ENCODE measurements at regions of chr5 and their contacts with region 1.

Region 1: DNA sequence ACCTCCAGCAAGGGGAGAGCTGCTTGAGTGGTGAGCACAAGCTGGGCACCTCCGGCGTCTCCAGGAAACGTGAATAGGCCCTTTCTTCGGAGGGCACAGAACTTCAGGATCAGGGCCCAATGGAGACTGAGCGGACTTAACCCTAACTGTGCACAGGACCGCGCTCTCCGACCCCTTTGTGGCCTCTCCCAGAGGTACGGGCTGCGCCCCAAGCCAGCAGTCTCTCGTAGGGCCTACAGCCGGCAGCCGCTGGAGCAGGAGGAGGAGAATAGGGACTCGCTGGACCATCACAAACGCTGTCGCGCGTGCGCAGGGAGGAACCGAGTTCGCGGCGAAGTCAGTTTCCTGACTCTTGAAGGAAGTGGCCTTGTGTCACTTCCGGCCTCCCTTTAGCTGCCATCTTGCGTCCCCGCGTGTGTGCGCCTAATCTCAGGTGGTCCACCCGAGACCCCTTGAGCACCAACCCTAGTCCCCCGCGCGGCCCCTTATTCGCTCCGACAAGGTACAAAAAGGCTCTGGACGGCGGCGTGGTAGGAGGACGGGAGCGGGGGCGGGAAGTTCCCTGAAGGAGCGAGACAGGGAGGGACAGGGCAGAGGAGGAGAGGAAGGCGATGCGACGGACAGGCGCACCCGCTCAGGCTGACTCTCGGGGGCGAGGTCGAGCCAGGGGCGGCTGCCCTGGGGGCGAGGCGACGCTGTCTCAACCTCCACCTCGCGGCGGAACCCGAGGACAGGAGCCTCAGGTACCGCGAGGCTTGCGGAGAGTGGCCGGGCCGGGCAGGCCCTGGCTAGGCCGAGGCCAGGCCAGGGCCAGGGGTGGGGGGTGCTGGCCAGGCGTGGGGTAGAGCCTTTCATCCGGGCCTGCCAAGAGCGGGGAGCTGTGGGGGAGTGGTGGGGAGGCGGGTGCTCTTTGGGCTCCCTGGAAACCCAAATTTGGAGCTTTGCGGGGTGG is at the start of gene BTF3:
- DNase-seq: peak; percentile 97
- H3K4me3 Mint-ChIP-seq: peak within 1 kb of the TSS; percentile 94
- H3K27ac Mint-ChIP-seq: peak within 1 kb of the TSS; percentile 98
- H3K4me1 Mint-ChIP-seq: peaks cover 15% of the 10 kb centered on the region
- H3K27me3 Mint-ChIP-seq: no peaks in the 10 kb centered on the region
- CTCF ChIP-seq: no peak
- total RNA-seq, gene BTF3: 937 and 946 TPM in 2 replicates

Region 2: DNA sequence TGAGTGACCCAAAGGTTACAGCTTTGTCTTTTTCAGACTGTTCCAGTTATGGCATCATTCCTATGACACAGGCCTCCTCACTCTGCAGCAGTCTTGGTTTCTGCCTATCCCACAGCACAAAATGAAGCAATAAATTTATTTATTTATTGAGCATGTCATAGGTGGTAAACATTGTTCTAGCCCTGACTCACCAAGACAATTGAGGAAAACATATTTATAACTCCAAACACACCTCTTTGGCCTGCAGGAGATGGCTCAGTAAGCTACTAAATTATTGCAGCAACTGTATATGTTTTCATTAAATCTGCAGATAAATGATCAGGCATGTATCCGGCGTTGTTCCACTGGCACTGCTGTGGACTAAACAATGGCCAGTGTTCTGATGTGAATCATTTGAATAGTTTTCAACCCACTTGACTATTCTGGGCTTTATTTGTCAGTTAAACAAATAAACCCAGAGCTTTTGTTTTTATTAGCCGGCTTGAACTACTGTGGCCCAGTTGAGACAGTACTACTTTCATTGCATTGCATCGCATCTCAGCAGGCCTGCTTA is 133.0 kb before region 1 on chr5:
- CTCF ChIA-PET with region 1: interaction called, 3 read pairs
- POLR2A ChIA-PET with region 1: interaction called, 24 read pairs
- intact Hi-C with region 1: no loop called
- DNase-seq: peak; percentile 69
- H3K4me3 Mint-ChIP-seq: no peak overlapping the region
- H3K27ac Mint-ChIP-seq: peak overlapping the region; percentile 71
- H3K4me1 Mint-ChIP-seq: peaks cover 33% of the 10 kb centered on the region
- H3K27me3 Mint-ChIP-seq: no peaks in the 10 kb centered on the region
- CTCF ChIP-seq: no peak

Region 3: GRCh38 chr5:73448463-73449136 is 49.7 kb before region 1 on chr5 and contains the start of gene FOXD1:
- CTCF ChIA-PET with region 1: interaction called, 5 read pairs
- POLR2A ChIA-PET with region 1: interaction called, 55 read pairs
- intact Hi-C with region 1: no loop called
- DNase-seq: peak; percentile 91
- H3K4me3 Mint-ChIP-seq: peak within 1 kb of the TSS; percentile 85
- H3K27ac Mint-ChIP-seq: peak within 1 kb of the TSS; percentile 87
- H3K4me1 Mint-ChIP-seq: peaks cover 11% of the 10 kb centered on the region
- H3K27me3 Mint-ChIP-seq: no peaks in the 10 kb centered on the region
- CTCF ChIP-seq: no peak
- total RNA-seq, gene FOXD1: 46.4 and 50.9 TPM in 2 replicates

Region 4: DNA sequence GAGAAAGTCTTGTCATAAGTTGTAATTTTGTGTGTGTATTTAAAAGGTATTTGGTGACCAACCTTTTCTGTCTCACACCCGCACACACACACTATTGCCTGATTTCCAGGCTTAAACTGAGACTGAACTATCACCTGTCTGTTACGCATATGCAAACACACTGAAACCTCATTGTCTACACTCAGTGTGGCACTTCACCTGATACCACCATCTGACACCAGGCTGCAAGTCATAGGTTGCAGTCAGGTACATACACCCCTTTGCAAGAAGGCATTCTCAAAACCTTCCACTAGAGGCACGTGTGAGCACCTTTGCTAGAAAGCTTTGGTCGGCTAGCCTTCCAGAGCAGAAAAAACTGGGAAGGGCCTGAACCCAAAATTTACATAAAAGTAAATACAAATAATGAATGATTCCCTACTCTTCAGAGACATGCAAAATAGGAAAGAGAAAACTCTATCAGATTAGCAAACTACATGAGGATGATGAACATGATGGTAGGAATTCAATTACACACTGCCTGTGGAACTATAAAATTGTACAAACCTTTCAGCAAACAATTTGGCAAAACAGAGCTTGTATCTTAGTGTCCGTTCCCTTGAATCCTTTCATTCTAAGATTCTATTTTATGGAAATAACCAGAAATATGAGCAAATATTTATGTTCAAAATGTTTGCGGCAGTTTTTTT is 43.8 kb before region 1 on chr5:
- CTCF ChIA-PET with region 1: interaction called, 5 read pairs
- POLR2A ChIA-PET with region 1: interaction called, 27 read pairs
- intact Hi-C with region 1: loop called (anchors 1 kb)
- DNase-seq: peak; percentile 85
- H3K4me3 Mint-ChIP-seq: no peak overlapping the region
- H3K27ac Mint-ChIP-seq: no peak overlapping the region
- H3K4me1 Mint-ChIP-seq: peaks cover 5% of the 10 kb centered on the region
- H3K27me3 Mint-ChIP-seq: no peaks in the 10 kb centered on the region
- CTCF ChIP-seq: peak; percentile 70

Region 5: GRCh38 chr5:73485715-73486114 is 12.6 kb before region 1 on chr5:
- CTCF ChIA-PET with region 1: interaction called, 5 read pairs
- POLR2A ChIA-PET with region 1: interaction called, 24 read pairs
- intact Hi-C with region 1: no loop called
- DNase-seq: no peak
- H3K4me3 Mint-ChIP-seq: no peak overlapping the region
- H3K27ac Mint-ChIP-seq: no peak overlapping the region
- H3K4me1 Mint-ChIP-seq: no peaks in the 10 kb centered on the region
- H3K27me3 Mint-ChIP-seq: no peaks in the 10 kb centered on the region
- CTCF ChIP-seq: no peak

Region 6: GRCh38 chr5:73565139-73565968 is 67.0 kb after region 1 on chr5 and contains the starts of genes ANKRA2 and UTP15:
- CTCF ChIA-PET with region 1: no interaction called
- POLR2A ChIA-PET with region 1: interaction called, 84 read pairs
- intact Hi-C with region 1: no loop called
- DNase-seq: peak; percentile 99
- H3K4me3 Mint-ChIP-seq: peak within 1 kb of the TSS; percentile 84
- H3K27ac Mint-ChIP-seq: peak within 1 kb of the TSS; percentile 94
- H3K4me1 Mint-ChIP-seq: peaks cover 11% of the 10 kb centered on the region
- H3K27me3 Mint-ChIP-seq: no peaks in the 10 kb centered on the region
- CTCF ChIP-seq: no peak
- total RNA-seq, gene ANKRA2: 19.3 and 20.2 TPM in 2 replicates
- total RNA-seq, gene UTP15: 41.2 and 41.3 TPM in 2 replicates

Region 7: DNA sequence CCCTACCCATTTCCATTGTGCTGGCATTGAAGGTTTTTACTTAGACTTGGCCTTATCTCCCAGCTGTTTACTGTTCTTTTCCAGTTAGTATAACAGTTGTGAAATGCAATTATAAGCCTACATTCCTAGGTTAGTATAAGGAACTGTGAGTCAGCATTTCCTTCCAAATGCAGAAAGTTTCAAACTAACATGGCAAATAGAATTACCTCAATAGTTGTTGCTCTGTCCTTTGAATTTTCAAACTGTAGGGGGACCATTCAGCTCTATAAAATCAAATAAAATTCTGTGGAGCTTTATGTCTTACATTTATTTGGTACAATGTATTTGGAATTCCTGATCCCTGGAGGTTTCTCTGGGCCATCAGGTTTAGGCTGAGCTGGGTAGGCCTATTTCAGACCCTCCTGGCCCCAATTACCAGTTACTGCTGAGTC is 174.8 kb after region 1 on chr5:
- CTCF ChIA-PET with region 1: no interaction called
- POLR2A ChIA-PET with region 1: no interaction called
- intact Hi-C with region 1: no loop called
- DNase-seq: peak; percentile 70
- H3K4me3 Mint-ChIP-seq: no peak overlapping the region
- H3K27ac Mint-ChIP-seq: peak overlapping the region; percentile 96
- H3K4me1 Mint-ChIP-seq: peaks cover 34% of the 10 kb centered on the region
- H3K27me3 Mint-ChIP-seq: no peaks in the 10 kb centered on the region
- CTCF ChIP-seq: no peak

Region 8: DNA sequence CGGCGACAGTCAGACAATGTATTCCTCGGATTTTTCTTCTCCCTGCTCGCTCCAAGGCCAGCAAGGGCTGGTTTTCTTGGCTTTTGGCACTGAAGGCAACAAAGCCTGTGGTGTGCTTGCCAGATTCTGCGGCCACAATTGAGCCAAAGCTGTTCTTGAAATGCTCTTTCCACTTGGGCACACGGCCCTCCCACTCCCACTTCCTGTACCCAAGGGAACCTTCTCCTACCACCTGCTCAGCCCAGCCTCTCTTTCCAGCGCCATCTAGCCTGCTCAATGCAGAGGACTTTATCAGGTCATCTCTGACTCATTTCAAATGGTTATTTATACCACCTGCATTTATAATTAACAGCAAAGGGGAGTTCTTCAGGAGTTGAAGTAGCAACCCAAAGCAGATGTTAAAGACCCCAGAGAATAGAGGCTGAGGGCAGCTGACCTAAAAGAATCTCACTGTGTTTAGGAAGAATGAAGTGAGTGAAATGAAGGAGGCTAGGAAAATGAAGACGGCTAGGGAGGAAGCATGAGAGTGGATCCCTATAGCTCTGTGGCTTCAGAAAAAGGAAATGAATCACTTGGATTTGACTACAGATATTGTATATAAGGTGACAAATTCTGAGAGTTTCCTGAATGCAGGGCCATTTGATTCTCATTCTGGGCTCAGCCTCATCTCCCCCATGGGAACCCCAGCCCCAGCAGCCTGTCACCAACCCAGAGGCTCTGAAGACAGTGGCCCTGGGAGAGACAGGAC is 703.2 kb after region 1 on chr5:
- CTCF ChIA-PET with region 1: no interaction called
- POLR2A ChIA-PET with region 1: no interaction called
- intact Hi-C with region 1: no loop called
- DNase-seq: peak; percentile 53
- H3K4me3 Mint-ChIP-seq: no peak overlapping the region
- H3K27ac Mint-ChIP-seq: no peak overlapping the region
- H3K4me1 Mint-ChIP-seq: peaks cover 18% of the 10 kb centered on the region
- H3K27me3 Mint-ChIP-seq: no peaks in the 10 kb centered on the region
- CTCF ChIP-seq: no peak

Measured in MCF 10A (cell line).